ENCODE measurements at regions of chr1 and their contacts with region 1.

Region 1: DNA sequence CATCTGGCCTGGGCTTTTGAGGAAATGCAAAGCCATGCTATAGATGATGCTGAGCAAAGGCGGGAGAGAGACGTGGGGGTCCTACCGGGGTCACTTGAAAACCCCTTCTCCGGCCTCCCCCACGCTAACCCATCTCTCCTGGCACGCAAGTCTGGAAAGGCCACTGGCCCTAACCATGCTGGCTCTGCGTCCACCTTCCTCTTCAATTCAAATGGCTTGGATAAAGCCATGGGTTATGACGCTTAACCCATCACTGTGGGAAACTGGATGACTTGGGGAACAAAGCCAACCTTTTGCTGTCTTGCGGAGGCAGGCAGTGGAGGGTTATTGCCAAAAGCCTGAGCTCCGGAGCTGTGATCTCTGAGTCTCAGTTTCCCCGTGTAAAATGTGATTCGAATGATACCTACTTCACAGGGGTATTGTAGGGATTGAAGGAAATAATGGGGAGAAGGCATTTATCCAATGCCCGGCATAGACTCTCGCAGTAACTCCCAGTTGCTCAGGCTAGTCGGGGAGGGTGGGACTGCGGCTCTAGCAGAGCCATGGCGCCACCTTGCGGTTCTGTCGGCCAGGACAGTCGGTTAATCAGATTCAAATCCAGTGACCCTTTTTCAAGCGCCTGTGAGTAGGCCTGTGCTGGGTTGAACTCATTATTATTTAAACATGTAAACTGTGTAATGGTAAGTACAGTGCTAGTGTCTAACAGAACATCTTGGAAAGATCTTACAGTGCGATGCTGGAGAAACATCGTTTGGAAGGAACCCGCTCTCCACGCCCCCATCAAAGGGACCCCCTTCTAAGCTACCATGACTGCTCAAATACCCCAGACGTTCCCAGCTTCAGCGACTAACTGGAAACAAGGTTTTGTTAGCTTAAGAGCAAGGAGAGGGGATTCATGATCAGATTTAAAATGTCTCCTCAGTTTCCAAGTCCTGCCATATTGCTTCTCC is 20.3 kb downstream of the NEK2 start:
- DNase-seq: peak; percentile 87
- ATAC-seq: peak; percentile 91 to 97 (median 95)
- H3K4me3 ChIP-seq: peak overlapping the region in 4 of 10 donors; percentile 7 to 48 (median 18)
- H3K27ac ChIP-seq: peak overlapping the region in 1 of 10 donors; percentile 7
- H3K4me1 ChIP-seq: peaks cover 0 to 9% (median 0%) of the 10 kb centered on the region in 9 donors
- H3K27me3 ChIP-seq: no peaks in the 10 kb centered on the region
- CTCF ChIP-seq: peak; percentile 88 to 95 (median 94)

Region 2: DNA sequence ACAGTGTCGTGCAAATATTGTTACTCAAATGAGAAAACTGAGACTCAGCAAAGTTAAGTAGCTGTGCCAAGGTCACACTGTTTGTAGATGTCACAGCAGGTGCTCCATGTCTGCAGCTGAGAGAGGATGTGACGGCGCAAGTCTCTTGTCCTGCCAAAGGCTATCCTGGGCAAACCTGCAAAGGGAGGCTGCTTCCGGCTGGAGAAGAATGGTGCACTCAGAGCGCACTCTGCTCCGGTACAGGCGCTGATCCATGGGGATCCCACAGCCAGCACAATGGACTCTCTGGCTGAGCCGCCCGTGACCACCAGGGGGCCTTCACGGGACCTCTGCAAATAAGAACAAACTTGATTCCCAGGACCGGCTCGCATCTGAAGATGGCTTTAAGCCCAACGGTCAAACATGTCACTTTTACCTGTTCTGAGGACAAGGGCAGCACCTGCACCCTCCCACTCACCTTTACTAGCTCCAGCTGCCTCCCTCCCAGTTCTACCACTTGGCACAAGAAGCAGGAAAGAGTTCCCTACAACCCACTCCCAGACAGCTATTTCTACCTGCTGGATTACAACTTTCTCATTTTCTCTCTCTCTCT is 185.1 kb before region 1 on chr1:
- intact Hi-C with region 1: loop called in 7 of 10 experiments (anchors 2 to 5 kb)
- DNase-seq: peak; percentile 76 to 78
- ATAC-seq: peak; percentile 77 to 96 (median 92)
- H3K4me3 ChIP-seq: peak overlapping the region in 1 of 10 donors; percentile 20
- H3K27ac ChIP-seq: no peak overlapping the region
- H3K4me1 ChIP-seq: peaks cover 0 to 26% (median 19%) of the 10 kb centered on the region in 9 donors
- H3K27me3 ChIP-seq: peaks cover 0 to 3% (median 0%) of the 10 kb centered on the region in 7 donors
- CTCF ChIP-seq: peak; percentile 61 to 90 (median 86)

Region 3: DNA sequence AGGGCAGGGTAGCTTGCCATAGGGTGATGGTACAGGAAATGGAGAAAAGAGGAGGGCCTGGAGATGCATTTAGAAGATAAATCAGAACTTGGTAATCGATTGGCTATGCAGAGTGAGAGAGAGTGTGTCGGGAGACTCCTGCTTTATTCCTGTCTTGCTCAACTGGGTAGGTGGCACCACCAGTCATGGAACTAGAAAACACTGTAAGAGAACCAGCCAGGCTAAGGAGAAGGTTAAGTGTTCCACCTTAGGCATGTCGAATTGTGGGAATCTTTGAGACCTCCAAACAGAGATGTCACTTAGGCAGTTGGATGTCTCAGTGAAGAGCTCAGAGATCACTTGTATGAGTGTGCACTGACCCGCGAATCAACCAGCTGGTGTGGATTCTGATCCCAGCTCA is 134.5 kb before region 1 on chr1:
- intact Hi-C with region 1: loop called in 9 of 10 experiments (anchors 1 to 5 kb)
- DNase-seq: no peak
- ATAC-seq: no peak
- H3K4me3 ChIP-seq: no peak overlapping the region
- H3K27ac ChIP-seq: no peak overlapping the region
- H3K4me1 ChIP-seq: peaks cover 0 to 9% (median 3%) of the 10 kb centered on the region in 9 donors
- H3K27me3 ChIP-seq: no peaks in the 10 kb centered on the region
- CTCF ChIP-seq: peak in 1 of 9 donors; percentile 28

Region 4: GRCh38 chr1:211715971-211716370 is 60.9 kb after region 1 on chr1:
- intact Hi-C with region 1: no loop called
- DNase-seq: no peak
- ATAC-seq: peak in 7 of 8 donors; percentile 34 to 82 (median 61)
- H3K4me3 ChIP-seq: no peak overlapping the region
- H3K27ac ChIP-seq: no peak overlapping the region
- H3K4me1 ChIP-seq: peaks cover 0 to 13% (median 6%) of the 10 kb centered on the region in 9 donors
- H3K27me3 ChIP-seq: no peaks in the 10 kb centered on the region
- CTCF ChIP-seq: no peak

Measured in heart right ventricle (tissue), 16 donors.